SK-N-SH (cell line): ENCODE measurements at regions of chr19 and their contacts with region 1.

Region 1: DNA sequence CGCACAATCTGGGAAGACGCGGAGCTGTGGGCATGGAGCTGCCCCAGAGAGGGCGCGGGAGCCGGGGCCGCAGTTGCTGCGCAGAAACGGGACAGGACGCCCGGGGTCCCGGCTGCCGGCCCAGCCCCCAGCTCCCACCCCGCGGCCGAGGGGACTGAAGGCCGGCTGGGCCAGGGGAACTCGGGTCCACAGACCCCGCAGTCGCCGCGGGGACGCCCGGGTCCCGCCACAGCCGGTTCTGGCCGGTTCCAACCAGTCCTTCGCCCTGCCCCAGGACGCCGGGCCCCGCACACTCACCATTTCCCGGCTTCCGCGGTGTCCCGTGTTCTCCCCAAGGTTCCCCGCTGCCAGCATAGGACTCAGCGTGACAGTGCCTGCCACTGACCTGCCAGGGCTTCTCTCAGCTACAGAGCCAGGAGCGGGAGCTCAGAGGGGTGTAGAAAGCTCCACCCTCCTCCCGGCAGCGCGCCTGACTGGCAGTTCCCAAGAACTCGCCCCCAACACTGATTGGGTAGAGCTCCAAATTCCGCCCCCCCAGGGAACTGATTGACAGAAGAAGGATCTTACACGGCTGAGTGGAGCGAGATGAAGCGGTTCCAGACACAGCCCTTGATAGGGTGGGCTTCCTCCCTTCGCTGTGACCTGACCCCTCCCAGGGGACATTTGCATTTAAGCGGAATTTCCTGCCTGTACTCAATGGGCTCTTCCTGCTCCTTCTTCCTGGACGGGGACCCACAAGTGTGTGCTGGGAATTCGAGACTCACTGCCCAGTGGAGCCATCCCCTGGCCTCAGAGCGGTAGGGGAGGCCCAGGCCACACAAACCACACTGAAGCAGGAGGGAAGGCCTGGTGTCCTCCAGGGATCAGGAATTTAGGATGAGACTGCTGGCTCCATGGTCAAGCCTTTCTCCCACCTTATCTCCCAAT is at the start of gene ZNF442:
- DNase-seq: peak; percentile 96
- H3K4me3 ChIP-seq: peak within 1 kb of the TSS; percentile 78 to 83
- H3K27ac ChIP-seq: peak within 1 kb of the TSS; percentile 54 to 66
- H3K4me1 ChIP-seq: no peaks in the 10 kb centered on the region; a peak in 1 of 4 replicates
- H3K27me3 ChIP-seq: no peaks in the 10 kb centered on the region
- CTCF ChIP-seq: peak; percentile 61
- EP300 ChIP-seq: no peak
- RAD21 ChIP-seq: peak; percentile 56
- polyA plus RNA-seq, gene ZNF442: 0.43 and 0.70 TPM in 2 replicates

Region 2: GRCh38 chr19:12333162-12334159 is 32.0 kb before region 1 on chr19 and contains the start of gene ZNF563:
- CTCF ChIA-PET with region 1: interaction called, 3 read pairs
- POLR2A ChIA-PET with region 1: interaction called, 15 read pairs
- DNase-seq: peak; percentile 94
- H3K4me3 ChIP-seq: peak within 1 kb of the TSS; percentile 82 to 95
- H3K27ac ChIP-seq: peak within 1 kb of the TSS; percentile 39 to 83; a peak in 3 of 4 replicates
- H3K4me1 ChIP-seq: peaks cover 0 to 14% of the 10 kb centered on the region in 2 experiments; a peak in 1 of 4 replicates
- H3K27me3 ChIP-seq: no peaks in the 10 kb centered on the region
- CTCF ChIP-seq: no peak
- EP300 ChIP-seq: no peak
- RAD21 ChIP-seq: no peak
- polyA plus RNA-seq, gene ZNF563: 0.99 and 1.3 TPM in 2 replicates

Region 3: GRCh38 chr19:12346896-12347295 is 18.6 kb before region 1 on chr19:
- CTCF ChIA-PET with region 1: no interaction called
- POLR2A ChIA-PET with region 1: no interaction called
- DNase-seq: no peak
- H3K4me3 ChIP-seq: no peak overlapping the region
- H3K27ac ChIP-seq: no peak overlapping the region
- H3K4me1 ChIP-seq: no peaks in the 10 kb centered on the region
- H3K27me3 ChIP-seq: no peaks in the 10 kb centered on the region
- CTCF ChIP-seq: no peak
- EP300 ChIP-seq: no peak
- RAD21 ChIP-seq: no peak

Region 4: GRCh38 chr19:12411893-12412292 is 46.4 kb after region 1 on chr19:
- CTCF ChIA-PET with region 1: no interaction called
- POLR2A ChIA-PET with region 1: no interaction called
- DNase-seq: no peak
- H3K4me3 ChIP-seq: no peak overlapping the region
- H3K27ac ChIP-seq: no peak overlapping the region
- H3K4me1 ChIP-seq: no peaks in the 10 kb centered on the region
- H3K27me3 ChIP-seq: no peaks in the 10 kb centered on the region
- CTCF ChIP-seq: no peak
- EP300 ChIP-seq: no peak
- RAD21 ChIP-seq: no peak